Activated T-helper 1 cell treated with anti-CD3 and anti-CD28 coated beads, Interleukin-12 subunit alpha, Interleukin-12 subunit beta, Interleukin-2, Interleukin-4 antibody, amounts not matched to agents 30 ng/mL and 10 ng/mL and 1 ng/mL, durations not matched to agents 14 hours and 24 hours and 36 hours (primary cell): ENCODE measurements at regions of chr6 and their contacts with region 1.

Region 1: DNA sequence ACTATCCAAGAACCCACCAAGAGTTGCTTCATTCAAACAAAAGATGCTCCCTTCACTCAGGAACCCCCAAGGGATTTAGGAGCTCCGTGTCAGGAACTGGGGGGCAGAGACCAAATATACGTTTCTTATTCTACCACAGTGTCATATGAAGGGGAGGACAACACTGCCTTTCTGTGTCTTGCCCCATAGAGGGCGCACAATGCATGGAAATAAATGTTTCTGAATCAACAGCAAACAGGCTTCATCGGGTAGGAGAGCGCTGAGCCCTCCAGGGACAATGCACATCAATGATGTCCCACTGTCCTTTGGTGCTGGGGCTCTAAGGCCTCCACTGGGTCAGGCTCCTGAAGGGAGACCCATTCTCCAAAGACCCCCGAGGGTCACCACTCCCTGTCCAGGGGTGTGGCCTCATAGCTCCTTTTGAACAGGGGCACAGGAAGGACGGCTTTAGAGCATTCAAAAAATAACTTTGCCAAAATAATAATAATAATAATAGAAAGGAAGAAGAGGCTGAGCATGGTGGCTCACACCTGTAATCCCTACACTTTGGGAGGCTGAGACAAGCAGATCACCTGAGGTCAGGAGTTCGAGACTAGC is 31.1 kb downstream of the PLG start:
- DNase-seq: no peak
- H3K4me3 Mint-ChIP-seq: no peak overlapping the region
- H3K27ac Mint-ChIP-seq: no peak overlapping the region
- H3K4me1 Mint-ChIP-seq: no peaks in the 10 kb centered on the region
- H3K27me3 Mint-ChIP-seq: peaks cover 11% of the 10 kb centered on the region

Region 2: GRCh38 chr6:160494576-160494975 is 238.6 kb before region 1 on chr6:
- intact Hi-C with region 1: no loop called
- DNase-seq: no peak
- H3K4me3 Mint-ChIP-seq: no peak overlapping the region
- H3K27ac Mint-ChIP-seq: no peak overlapping the region
- H3K4me1 Mint-ChIP-seq: no peaks in the 10 kb centered on the region
- H3K27me3 Mint-ChIP-seq: peaks cover 13% of the 10 kb centered on the region

Region 3: DNA sequence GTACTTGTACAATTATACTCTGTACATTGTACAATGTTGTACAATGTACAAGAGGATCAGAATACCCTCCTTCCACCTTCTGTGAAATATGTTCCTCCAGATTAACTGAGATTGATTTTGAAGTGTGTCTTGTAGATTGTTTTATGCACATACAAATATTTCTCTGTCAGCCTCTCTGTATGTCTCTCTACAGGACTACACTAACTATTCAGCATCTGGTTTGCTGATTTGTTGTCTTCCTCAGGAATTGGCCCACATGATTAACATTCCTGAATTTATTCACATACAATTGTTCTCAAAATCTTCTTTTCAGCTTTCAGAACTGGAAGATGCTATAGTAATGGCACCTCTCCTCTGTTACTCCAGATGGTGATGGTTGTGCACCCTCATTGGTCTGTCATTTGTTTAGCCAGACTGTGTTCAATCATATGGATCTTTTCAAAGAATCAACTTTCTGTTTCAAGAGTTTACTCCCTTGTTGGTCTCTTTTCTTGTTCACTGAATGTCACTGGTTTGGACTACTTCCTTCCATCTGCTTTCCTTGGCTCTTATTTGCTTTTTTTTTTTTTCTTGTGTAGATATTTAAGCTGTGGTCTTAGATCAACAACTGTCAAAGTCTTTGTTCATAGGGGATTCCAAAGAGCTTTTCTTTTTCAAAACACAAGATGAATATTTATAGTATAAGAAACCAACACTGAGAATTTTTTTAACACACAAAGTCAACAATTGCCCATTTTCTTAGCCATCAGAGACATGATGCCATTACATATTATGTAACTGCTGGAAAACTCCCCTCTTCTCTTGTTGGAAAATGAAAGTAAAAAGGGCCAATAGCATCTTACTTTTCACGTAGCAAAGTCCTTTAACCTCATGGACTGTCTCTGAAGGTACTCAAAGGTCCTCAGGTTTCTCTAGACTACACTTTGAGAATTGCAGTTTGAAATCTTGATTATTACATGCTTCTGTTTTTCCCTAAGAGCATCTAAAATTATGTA is 137.0 kb before region 1 on chr6:
- intact Hi-C with region 1: no loop called
- DNase-seq: no peak
- H3K4me3 Mint-ChIP-seq: no peak overlapping the region
- H3K27ac Mint-ChIP-seq: no peak overlapping the region
- H3K4me1 Mint-ChIP-seq: no peaks in the 10 kb centered on the region
- H3K27me3 Mint-ChIP-seq: no peaks in the 10 kb centered on the region

Region 4: GRCh38 chr6:160679402-160679769 is 53.8 kb before region 1 on chr6:
- intact Hi-C with region 1: no loop called
- DNase-seq: no peak
- H3K4me3 Mint-ChIP-seq: no peak overlapping the region
- H3K27ac Mint-ChIP-seq: no peak overlapping the region
- H3K4me1 Mint-ChIP-seq: no peaks in the 10 kb centered on the region
- H3K27me3 Mint-ChIP-seq: peaks cover 6% of the 10 kb centered on the region

Region 5: GRCh38 chr6:160766989-160767660 is 34.0 kb after region 1 on chr6:
- intact Hi-C with region 1: loop called (anchors 1 kb)
- DNase-seq: peak; percentile 24
- H3K4me3 Mint-ChIP-seq: peak overlapping the region; percentile 67
- H3K27ac Mint-ChIP-seq: no peak overlapping the region
- H3K4me1 Mint-ChIP-seq: no peaks in the 10 kb centered on the region
- H3K27me3 Mint-ChIP-seq: peaks cover 27% of the 10 kb centered on the region

Region 6: DNA sequence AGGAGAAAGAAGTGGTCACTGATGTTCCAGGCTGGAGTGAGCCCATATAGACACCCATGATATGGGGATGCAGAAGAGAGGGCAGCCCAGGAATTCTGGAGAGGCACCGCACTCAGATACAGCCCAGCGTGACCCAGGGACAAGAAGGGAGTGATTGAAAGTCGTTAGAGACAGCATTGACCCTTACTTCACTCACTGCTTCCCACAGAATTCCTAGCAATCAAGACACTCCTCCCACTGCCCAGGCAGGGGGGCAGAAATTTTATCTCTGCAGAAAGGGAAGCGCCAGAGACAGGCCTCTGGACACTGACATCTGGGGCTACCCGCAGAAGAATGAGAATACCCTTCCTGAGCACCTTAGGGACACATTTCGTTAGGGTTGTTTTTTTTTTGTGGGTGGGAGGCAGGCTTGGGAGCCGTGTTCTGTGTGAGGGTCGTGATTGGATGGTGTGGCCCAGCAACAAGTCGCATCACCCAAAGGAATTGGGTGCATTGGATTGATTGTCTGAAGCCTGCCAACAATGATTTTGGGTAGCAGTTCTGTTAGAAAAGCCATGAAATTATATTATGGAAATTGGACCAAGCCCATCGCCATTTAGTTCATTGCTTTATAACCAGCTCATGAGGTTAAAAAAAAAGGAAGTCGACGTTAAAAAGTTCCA is 212.5 kb after region 1 on chr6:
- intact Hi-C with region 1: no loop called
- DNase-seq: no peak
- H3K4me3 Mint-ChIP-seq: no peak overlapping the region
- H3K27ac Mint-ChIP-seq: no peak overlapping the region
- H3K4me1 Mint-ChIP-seq: no peaks in the 10 kb centered on the region
- H3K27me3 Mint-ChIP-seq: peaks cover 9% of the 10 kb centered on the region